AG04449 (cell line): ENCODE measurements at regions of chr5 and their contacts with region 1.

Region 1: GRCh38 chr5:54944364-54944763 is 41.0 kb downstream of the ESM1 start:
- DNase-seq: peak; percentile 4
- H3K4me3 ChIP-seq: no peak overlapping the region
- CTCF ChIP-seq: peak; percentile 59

Region 2: GRCh38 chr5:54915466-54916027 is 28.8 kb before region 1 on chr5:
- CTCF ChIA-PET with region 1: interaction called, 37 read pairs
- POLR2A ChIA-PET with region 1: no interaction called
- DNase-seq: no peak
- H3K4me3 ChIP-seq: no peak overlapping the region
- CTCF ChIP-seq: no peak

Region 3: DNA sequence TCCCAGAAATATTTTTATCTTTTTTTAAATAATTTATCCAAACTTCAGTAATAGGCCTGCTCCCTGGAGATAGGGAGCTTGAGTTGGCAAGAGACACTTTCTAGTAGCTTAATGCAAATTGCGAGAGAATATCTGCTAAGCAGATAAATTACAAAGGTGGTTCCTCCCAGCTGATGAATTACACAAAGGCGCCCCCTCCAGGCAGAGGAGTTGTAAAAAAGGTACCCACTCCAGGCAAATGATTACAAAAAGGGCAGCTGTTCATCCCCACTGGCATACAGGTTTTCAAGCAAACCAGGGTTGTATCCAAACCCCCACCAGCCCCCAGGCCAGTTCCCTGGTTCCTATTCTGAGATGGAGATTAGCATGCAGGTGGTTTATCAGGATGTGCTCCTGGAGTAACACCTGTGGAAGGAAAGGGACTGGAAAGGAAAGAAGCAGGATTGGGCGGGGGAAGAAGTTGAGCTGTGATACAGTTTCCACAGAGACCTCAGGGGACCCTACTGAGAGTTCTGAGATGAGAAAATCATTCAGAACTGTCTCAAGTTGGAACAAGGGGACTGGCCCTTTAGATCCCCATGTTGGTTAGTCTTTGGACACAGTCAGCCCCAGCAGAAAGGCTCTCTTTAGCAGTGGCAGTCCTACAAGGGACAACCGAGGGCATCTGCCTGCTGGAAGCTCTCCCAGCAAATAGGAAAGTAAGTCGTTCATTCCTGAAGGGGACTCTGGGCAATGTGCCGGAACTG is 15.5 kb after region 1 on chr5:
- CTCF ChIA-PET with region 1: interaction called, 124 read pairs
- POLR2A ChIA-PET with region 1: no interaction called
- DNase-seq: no peak
- H3K4me3 ChIP-seq: no peak overlapping the region
- CTCF ChIP-seq: no peak

Region 4: GRCh38 chr5:54975701-54976100 is 31.3 kb after region 1 on chr5:
- CTCF ChIA-PET with region 1: interaction called, 15 read pairs
- POLR2A ChIA-PET with region 1: no interaction called
- DNase-seq: no peak
- H3K4me3 ChIP-seq: no peak overlapping the region
- CTCF ChIP-seq: no peak

Region 5: DNA sequence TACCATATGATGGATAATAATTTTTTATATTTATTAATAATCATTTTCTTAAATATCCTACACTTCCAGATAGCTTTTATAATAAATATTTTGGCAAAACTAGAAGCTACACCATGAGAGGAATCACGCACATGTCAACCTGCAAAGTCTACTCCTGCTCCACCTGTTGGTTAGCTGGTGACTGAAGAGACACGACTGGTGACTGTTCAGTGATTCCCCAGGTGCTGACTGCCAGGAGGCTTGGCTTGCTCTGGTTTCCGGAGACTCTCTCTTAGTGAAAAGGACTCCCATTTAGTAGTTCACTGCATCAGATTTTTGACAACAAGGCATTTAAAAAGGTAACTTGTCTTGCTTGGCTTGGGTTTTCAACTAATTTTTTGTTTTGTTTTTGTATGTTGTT is 179.0 kb after region 1 on chr5:
- CTCF ChIA-PET with region 1: interaction called, 15 read pairs
- POLR2A ChIA-PET with region 1: no interaction called
- DNase-seq: no peak
- H3K4me3 ChIP-seq: no peak overlapping the region
- CTCF ChIP-seq: no peak

Region 6: DNA sequence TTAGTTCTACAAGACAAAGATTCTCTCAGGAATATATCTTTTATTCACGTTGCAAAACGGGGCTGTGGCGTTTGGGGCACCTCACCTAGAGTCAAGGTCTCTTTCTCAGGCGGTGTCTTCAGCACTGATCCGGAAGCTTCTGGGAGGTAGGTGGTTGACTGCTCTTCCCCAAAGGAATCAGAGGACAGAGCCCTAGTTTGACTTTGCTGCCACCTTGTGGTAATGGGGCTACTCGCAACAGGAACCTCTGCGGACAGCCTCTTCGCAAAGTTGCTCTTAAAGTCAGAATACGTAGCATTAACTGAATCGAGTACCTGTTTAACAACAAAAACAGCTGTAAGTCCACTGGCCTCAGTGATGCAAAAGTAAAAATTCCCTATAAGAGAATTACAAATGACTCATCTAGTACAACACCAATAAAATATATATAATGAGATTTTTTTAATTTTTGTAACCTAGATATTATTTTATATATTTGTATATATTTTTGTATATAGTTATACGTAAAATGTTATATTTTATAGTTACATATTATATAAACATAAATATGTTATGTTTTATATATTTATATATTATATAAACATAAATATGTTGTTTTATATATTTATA is 202.3 kb after region 1 on chr5:
- CTCF ChIA-PET with region 1: interaction called, 143 read pairs
- POLR2A ChIA-PET with region 1: no interaction called
- DNase-seq: peak; percentile 17
- H3K4me3 ChIP-seq: no peak overlapping the region
- CTCF ChIP-seq: peak; percentile 95

Region 7: DNA sequence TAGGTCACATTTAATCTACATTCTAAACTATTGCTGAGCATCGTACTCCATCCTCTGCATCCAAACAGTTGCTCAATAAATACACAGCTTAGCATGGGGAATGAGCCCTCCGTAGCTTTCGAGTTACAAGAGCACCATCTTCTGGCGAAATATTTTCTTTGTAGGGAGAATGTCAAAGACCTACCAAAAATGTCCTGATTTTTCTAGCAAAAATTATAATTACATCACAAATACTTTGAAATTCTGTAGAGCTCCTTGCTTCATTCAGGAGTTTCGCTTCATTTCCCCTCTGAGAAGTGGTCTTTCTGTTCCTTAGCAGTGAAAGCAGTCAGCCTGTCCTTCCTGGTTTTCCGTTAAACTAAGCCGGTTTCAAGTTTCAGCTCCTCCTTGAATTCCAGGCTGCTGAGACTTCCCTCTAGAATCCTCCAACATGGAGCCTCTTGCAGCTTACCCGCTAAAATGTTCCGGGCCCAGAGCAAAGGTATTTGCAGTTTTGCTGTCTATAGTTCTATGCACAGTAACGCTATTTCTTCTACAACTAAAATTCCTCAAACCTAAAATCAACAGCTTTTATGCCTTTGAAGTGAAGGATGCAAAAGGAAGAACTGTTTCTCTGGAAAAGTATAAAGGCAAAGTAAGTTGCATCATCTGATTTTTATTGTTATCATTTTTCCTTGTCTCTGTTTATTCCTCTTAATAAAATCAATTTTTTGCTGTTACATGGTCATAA is 215.6 kb after region 1 on chr5 and contains the start of gene GPX8:
- CTCF ChIA-PET with region 1: interaction called, 46 read pairs
- POLR2A ChIA-PET with region 1: interaction called, 4 read pairs
- DNase-seq: peak; percentile 59
- H3K4me3 ChIP-seq: peak within 1 kb of the TSS; percentile 69
- CTCF ChIP-seq: peak; percentile 26